H1 (cell line): ENCODE measurements at regions of chr12 and their contacts with region 1.

Region 1: GRCh38 chr12:111274777-111275176 is 94.1 kb downstream of the PHETA1 start:
- DNase-seq: no peak
- H3K4me3 ChIP-seq: no peak overlapping the region
- H3K27ac ChIP-seq: no peak overlapping the region
- H3K4me1 ChIP-seq: no peaks in the 10 kb centered on the region
- H3K27me3 ChIP-seq: no peaks in the 10 kb centered on the region
- CTCF ChIP-seq: peak in 2 of 3 experiments; percentile 31 to 68; a peak in 2 of 4 replicates
- EP300 ChIP-seq: no peak
- POLR2A ChIP-seq: no peak
- RAD21 ChIP-seq: peak; percentile 21 to 27; a peak in 2 of 4 replicates

Region 2: DNA sequence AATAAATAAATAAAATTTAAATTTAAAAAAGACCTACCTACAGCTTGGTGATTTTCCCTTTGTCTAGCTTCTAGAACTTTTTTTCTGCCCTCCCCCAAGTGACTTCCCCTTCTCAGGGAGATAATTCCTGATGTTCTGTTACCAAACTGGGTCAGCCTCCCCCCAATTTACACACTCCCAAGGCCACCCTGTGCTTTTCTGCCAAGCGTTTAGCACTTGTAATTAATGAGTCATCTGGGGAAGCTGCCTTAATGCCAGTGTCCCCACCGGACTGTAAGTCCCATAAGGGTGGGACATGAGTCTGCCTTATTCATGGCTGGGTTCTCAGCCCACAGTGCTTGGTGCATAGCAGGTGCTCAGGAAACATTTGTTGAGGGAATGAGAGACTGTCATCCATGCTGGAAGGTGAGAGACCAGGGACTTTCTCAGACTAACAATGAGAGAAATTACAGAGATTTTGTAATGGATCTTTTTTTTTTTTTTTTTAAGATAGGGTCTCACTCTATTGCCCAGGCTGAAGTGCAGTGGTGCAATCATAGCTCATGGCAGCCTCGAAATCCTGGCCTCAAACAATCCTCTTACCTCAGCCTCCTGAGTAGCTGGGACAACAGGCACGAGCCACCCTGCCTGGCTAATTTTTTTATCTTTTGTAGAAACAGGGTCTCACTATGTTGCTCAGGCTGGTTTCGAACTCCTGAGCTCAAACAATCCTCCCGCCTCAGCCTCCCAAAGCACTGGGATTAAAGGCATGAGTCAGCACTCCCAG is 12.7 kb before region 1 on chr12:
- CTCF ChIA-PET with region 1: interaction called, 82 read pairs
- POLR2A ChIA-PET with region 1: no interaction called
- DNase-seq: no peak
- H3K4me3 ChIP-seq: no peak overlapping the region
- H3K27ac ChIP-seq: no peak overlapping the region
- H3K4me1 ChIP-seq: no peaks in the 10 kb centered on the region
- H3K27me3 ChIP-seq: no peaks in the 10 kb centered on the region
- CTCF ChIP-seq: no peak
- EP300 ChIP-seq: no peak
- POLR2A ChIP-seq: no peak
- RAD21 ChIP-seq: no peak

Region 3: DNA sequence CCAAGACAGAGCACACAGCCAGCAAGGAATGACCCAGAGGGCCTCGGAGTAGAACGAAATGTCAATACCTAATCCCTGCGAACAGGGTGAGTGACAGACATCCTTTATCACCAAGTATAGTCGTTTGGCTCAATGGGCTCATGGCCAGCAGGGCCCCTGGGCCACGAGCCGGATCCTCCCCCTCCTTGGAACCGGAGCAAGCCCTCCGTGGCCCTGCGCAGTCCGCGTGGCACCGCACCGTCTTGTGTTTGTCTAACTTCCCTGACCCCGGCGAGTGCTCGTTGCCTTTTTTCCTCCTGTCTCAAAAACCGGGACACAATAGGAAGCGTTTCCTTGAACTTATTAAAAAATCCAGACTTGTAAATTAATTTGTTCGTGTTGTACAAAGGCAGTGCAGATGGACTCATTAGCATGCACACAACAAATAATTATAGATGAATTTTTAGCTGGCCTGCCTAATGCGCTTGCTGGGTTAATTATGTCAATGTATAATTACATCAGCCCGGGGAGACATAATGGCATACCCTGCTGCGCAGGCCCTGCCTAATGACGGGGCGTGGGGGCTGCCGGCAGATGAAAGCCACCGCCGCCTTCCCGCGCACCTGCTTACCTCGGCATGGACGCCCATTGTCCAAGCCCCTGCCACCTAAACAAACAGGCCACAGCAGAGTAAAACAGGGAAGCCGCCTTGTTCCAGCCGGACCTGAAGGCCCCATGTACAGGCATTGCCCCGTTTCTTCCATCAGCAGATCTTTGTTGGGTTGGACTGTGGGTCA is 12.5 kb after region 1 on chr12:
- CTCF ChIA-PET with region 1: interaction called, 70 read pairs
- POLR2A ChIA-PET with region 1: interaction called, 7 read pairs
- DNase-seq: no peak
- H3K4me3 ChIP-seq: no peak overlapping the region
- H3K27ac ChIP-seq: no peak overlapping the region
- H3K4me1 ChIP-seq: peaks cover 8 to 9% (median 8%) of the 10 kb centered on the region in 4 experiments
- H3K27me3 ChIP-seq: no peaks in the 10 kb centered on the region
- CTCF ChIP-seq: no peak
- EP300 ChIP-seq: no peak
- POLR2A ChIP-seq: no peak
- RAD21 ChIP-seq: no peak